ENCODE measurements at regions of chr4 and their contacts with region 1.

Region 1: DNA sequence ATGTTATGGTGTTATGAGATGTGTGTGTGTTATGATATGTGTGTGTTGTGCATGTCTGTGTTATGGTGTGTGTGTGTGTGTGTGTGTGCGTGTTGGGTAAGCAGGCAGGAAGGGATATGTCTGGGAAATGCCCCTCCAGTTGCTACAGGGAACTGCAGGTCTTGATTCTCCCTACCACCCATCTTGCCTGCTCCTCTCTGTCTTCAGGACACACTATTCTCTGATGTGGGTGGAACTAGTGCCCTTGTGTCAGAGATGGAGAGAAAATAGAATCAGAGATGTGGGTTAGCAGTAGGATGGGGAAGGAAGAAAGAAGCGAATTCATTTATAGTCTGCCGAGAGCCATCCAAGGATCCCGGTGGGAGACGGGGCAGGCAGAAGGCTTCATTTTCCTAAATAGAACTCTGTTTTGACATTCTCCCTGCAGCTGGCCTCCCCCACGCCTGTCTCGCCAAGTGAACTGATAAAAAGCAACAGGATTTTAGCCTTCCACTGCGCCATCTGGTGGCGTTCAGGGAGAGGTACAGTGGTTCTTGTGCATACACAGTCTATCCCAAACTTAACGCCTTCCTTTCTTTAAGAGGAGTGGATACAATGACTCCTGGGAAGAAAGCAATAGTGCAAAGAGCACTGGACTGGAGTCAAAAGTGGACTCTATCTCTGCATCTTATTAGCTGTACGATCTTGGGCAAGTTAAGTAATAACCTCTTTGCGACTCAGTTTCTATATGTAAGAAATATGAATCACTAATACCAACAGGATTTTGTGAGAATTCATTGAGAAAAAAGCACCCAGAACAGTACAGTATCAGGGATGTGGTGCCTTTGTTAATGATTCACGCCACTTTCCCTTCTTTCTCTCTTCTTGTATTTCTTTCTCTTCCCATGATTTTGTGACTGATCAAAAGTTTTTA is 14.1 kb upstream of the MGST2 start:
- DNase-seq: peak; percentile 56 to 68 (median 61)
- H3K4me3 ChIP-seq: no peak overlapping the region
- H3K4me3 Mint-ChIP-seq: peak overlapping the region in 4 of 8 donors; percentile 6 to 32 (median 14)
- H3K27ac ChIP-seq: no peak overlapping the region
- H3K27ac Mint-ChIP-seq: no peak overlapping the region
- H3K4me1 ChIP-seq: no peaks in the 10 kb centered on the region
- H3K4me1 Mint-ChIP-seq: peaks cover 0 to 7% (median 5%) of the 10 kb centered on the region in 4 donors
- H3K27me3 ChIP-seq: no peaks in the 10 kb centered on the region
- H3K27me3 Mint-ChIP-seq: peaks cover 0 to 2% of the 10 kb centered on the region in 2 donors

Region 2: DNA sequence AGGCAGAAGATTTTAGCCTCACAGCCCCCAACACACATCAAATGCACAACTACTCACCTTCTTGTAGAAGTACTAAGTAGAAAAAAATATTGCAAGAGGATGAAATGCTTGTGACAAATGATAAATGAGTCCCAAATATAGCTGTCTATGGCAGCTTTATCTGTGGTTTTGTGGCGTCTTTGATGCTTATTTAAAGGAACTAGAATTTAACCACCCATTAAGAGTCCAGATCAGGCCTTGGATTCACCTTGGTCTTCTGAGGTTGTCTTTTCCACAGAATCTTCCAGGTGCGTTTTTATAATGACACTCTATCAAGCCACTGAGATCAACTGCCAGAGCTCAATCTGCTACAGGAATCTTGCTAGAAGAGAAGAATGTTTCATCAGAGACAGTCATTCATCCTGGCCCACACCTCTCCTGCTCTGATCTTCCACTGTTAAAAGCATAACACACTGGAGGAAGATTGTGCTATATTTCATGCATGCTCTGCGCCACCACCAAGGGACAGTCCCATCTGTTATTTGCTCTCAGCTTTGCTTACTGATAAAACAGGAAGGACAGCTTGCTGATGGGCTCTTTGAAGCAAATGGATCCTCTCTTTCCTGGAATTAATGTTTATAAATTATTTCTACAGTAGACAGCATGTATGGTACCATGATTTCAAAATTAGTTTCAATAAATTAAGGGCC is 1553.5 kb before region 1 on chr4:
- CTCF ChIA-PET with region 1: no interaction called
- POLR2A ChIA-PET with region 1: no interaction called
- intact Hi-C with region 1: no loop called
- DNase-seq: no peak
- H3K4me3 ChIP-seq: no peak overlapping the region
- H3K4me3 Mint-ChIP-seq: no peak overlapping the region
- H3K27ac ChIP-seq: no peak overlapping the region
- H3K27ac Mint-ChIP-seq: no peak overlapping the region
- H3K4me1 ChIP-seq: no peaks in the 10 kb centered on the region
- H3K4me1 Mint-ChIP-seq: no peaks in the 10 kb centered on the region
- H3K27me3 ChIP-seq: no peaks in the 10 kb centered on the region
- H3K27me3 Mint-ChIP-seq: no peaks in the 10 kb centered on the region

Region 3: GRCh38 chr4:139099366-139099982 is 552.1 kb before region 1 on chr4:
- CTCF ChIA-PET with region 1: no interaction called
- POLR2A ChIA-PET with region 1: no interaction called
- intact Hi-C with region 1: loop called (anchors 10 kb)
- DNase-seq: peak; percentile 70 to 78 (median 73)
- H3K4me3 ChIP-seq: no peak overlapping the region
- H3K4me3 Mint-ChIP-seq: no peak overlapping the region
- H3K27ac ChIP-seq: no peak overlapping the region
- H3K27ac Mint-ChIP-seq: peak overlapping the region in 1 of 7 donors; percentile 43
- H3K4me1 ChIP-seq: no peaks in the 10 kb centered on the region
- H3K4me1 Mint-ChIP-seq: peaks cover 0 to 6% (median 3%) of the 10 kb centered on the region in 4 donors
- H3K27me3 ChIP-seq: no peaks in the 10 kb centered on the region
- H3K27me3 Mint-ChIP-seq: no peaks in the 10 kb centered on the region

Region 4: DNA sequence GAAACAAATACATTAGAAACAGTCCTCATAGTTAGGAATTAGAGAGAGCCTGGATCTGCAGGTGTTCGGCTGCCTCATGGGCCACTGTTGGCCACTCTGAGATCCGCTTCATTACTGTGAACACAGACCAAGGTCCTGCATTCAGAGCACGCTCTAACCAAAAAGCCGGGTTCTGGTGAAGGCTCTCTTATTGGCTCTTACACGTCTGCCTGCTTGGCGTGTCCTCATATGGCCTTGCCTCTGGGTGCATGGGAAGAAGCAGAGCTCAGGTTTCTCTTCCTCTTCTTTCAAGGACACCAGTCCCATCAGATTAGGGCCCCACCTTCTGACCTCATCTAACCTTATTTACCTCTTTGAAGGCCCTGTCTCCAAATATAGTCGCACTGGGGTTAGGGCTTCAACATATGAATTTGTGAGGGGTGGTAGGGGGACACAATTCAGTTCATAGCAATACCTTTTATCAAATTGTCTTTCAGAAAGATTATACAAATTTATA is 437.5 kb before region 1 on chr4:
- CTCF ChIA-PET with region 1: no interaction called
- POLR2A ChIA-PET with region 1: no interaction called
- intact Hi-C with region 1: no loop called
- DNase-seq: no peak
- H3K4me3 ChIP-seq: no peak overlapping the region
- H3K4me3 Mint-ChIP-seq: no peak overlapping the region
- H3K27ac ChIP-seq: no peak overlapping the region
- H3K27ac Mint-ChIP-seq: no peak overlapping the region
- H3K4me1 ChIP-seq: no peaks in the 10 kb centered on the region
- H3K4me1 Mint-ChIP-seq: peaks cover 0 to 4% (median 2%) of the 10 kb centered on the region in 4 donors
- H3K27me3 ChIP-seq: no peaks in the 10 kb centered on the region
- H3K27me3 Mint-ChIP-seq: no peaks in the 10 kb centered on the region

Region 5: GRCh38 chr4:139416073-139416673 is 235.4 kb before region 1 on chr4:
- CTCF ChIA-PET with region 1: interaction called, 4 read pairs
- POLR2A ChIA-PET with region 1: no interaction called
- intact Hi-C with region 1: loop called (anchors 1 kb)
- DNase-seq: peak in 4 of 5 donors; percentile 28 to 47 (median 42)
- H3K4me3 ChIP-seq: no peak overlapping the region
- H3K4me3 Mint-ChIP-seq: no peak overlapping the region
- H3K27ac ChIP-seq: no peak overlapping the region
- H3K27ac Mint-ChIP-seq: no peak overlapping the region
- H3K4me1 ChIP-seq: no peaks in the 10 kb centered on the region
- H3K4me1 Mint-ChIP-seq: peaks cover 4 to 17% (median 5%) of the 10 kb centered on the region in 4 donors
- H3K27me3 ChIP-seq: no peaks in the 10 kb centered on the region
- H3K27me3 Mint-ChIP-seq: no peaks in the 10 kb centered on the region

Region 6: GRCh38 chr4:139501927-139502899 is 149.3 kb before region 1 on chr4:
- CTCF ChIA-PET with region 1: interaction called, 31 read pairs
- POLR2A ChIA-PET with region 1: no interaction called
- intact Hi-C with region 1: loop called (anchors 1 kb)
- DNase-seq: peak in 1 of 5 donors; percentile 31
- H3K4me3 ChIP-seq: no peak overlapping the region
- H3K4me3 Mint-ChIP-seq: no peak overlapping the region
- H3K27ac ChIP-seq: no peak overlapping the region
- H3K27ac Mint-ChIP-seq: peak overlapping the region in 1 of 7 donors; percentile 43
- H3K4me1 ChIP-seq: no peaks in the 10 kb centered on the region
- H3K4me1 Mint-ChIP-seq: peaks cover 0 to 6% (median under 1%) of the 10 kb centered on the region in 4 donors
- H3K27me3 ChIP-seq: no peaks in the 10 kb centered on the region
- H3K27me3 Mint-ChIP-seq: no peaks in the 10 kb centered on the region

Region 7: DNA sequence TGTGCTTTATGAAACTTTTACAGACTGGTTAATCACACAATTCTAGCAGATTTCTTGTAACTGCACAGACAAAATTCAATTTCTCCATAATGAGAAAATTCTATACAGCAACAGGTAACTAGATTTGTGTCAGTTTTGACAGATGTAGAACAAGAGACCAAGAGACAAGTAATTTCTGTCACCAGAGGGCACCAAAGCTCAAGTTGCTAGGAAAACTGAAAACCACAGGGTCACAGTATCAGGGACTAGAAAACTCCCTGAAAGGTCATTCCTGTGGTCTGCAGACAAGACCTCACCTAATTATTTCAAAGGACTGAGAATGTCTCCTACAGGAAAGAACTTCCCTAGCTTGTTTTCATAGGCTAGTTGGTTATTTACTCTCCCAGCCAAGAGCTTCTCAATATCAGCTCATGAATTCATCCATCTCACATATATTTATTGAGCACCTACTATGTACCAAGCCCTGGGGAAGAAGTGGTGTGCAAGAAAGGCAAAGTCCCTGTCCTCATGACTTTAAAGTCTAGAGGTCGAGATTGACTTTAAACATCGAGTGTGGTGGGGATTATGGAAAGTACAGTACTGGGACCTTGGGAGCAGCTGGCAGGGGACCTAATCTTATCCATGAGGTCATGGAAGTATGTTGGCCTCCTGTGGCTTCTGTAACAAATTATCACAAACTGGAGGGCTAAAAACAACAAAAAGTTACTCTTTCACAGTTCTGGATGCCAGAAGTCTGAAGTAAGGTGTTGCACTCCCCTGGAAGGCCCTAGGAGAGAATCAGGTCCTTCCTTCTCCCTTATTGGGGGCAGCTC is 47.8 kb before region 1 on chr4:
- CTCF ChIA-PET with region 1: interaction called, 149 read pairs
- POLR2A ChIA-PET with region 1: interaction called, 4 read pairs
- intact Hi-C with region 1: loop called (anchors 1 kb)
- DNase-seq: peak in 4 of 5 donors; percentile 22 to 36 (median 34)
- H3K4me3 ChIP-seq: no peak overlapping the region
- H3K4me3 Mint-ChIP-seq: no peak overlapping the region
- H3K27ac ChIP-seq: no peak overlapping the region
- H3K27ac Mint-ChIP-seq: no peak overlapping the region
- H3K4me1 ChIP-seq: peaks cover 4% of the 10 kb centered on the region
- H3K4me1 Mint-ChIP-seq: peaks cover 13 to 15% (median 14%) of the 10 kb centered on the region in 4 donors
- H3K27me3 ChIP-seq: no peaks in the 10 kb centered on the region
- H3K27me3 Mint-ChIP-seq: peaks cover 4 to 6% of the 10 kb centered on the region in 2 donors

Region 8: GRCh38 chr4:139665690-139666529 is 14.4 kb after region 1 on chr4 and contains the start of gene MGST2:
- CTCF ChIA-PET with region 1: interaction called, 204 read pairs
- POLR2A ChIA-PET with region 1: interaction called, 25 read pairs
- intact Hi-C with region 1: no loop called
- DNase-seq: peak; percentile 16 to 36 (median 24)
- H3K4me3 ChIP-seq: peak within 1 kb of the TSS; percentile 37 to 58
- H3K4me3 Mint-ChIP-seq: peak within 1 kb of the TSS; percentile 93 to 100 (median 98)
- H3K27ac ChIP-seq: peak within 1 kb of the TSS; percentile 34
- H3K27ac Mint-ChIP-seq: peak within 1 kb of the TSS; percentile 64 to 98 (median 88)
- H3K4me1 ChIP-seq: peaks cover 16% of the 10 kb centered on the region
- H3K4me1 Mint-ChIP-seq: peaks cover 12 to 31% (median 15%) of the 10 kb centered on the region in 4 donors
- H3K27me3 ChIP-seq: no peaks in the 10 kb centered on the region
- H3K27me3 Mint-ChIP-seq: no peaks in the 10 kb centered on the region
- total RNA-seq, gene MGST2: 1.0 to 1.5 TPM